HEK293 (cell line): ENCODE measurements at regions of chr6 and their contacts with region 1.

Region 1: GRCh38 chr6:132962936-132963868 is 148.8 kb downstream of the RPS12 start:
- H3K4me3 ChIP-seq: no peak overlapping the region
- H3K27ac ChIP-seq: no peak overlapping the region
- H3K4me1 ChIP-seq: peaks cover 19% of the 10 kb centered on the region
- CTCF ChIP-seq: peak; percentile 70; the same call in 1 of the 2 replicates

Region 2: DNA sequence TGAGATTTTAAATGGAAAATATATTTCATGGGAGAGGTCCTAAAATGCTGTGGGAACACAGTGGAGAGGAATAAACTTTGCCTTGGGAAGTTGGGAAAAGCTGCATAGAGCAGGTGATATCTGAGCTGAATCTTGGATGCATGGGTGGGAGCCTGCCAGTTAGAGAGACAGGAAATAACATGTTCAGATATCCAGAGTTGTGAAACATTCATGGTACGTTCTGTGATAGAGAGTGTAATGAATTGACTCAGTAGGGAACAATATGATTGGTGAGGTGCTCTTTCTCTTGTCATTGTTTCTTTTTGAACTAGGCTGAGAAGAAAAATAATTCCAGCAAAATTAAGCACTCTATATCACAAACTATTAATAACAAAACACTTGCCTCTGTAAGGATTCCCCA is 76.0 kb before region 1 on chr6:
- CTCF ChIA-PET with region 1: no interaction called
- POLR2A ChIA-PET with region 1: no interaction called
- H3K4me3 ChIP-seq: no peak overlapping the region
- H3K27ac ChIP-seq: no peak overlapping the region
- H3K4me1 ChIP-seq: no peaks in the 10 kb centered on the region
- CTCF ChIP-seq: no peak

Region 3: GRCh38 chr6:132937466-132937906 is 25.7 kb before region 1 on chr6:
- CTCF ChIA-PET with region 1: interaction called, 14 read pairs
- POLR2A ChIA-PET with region 1: no interaction called
- H3K4me3 ChIP-seq: no peak overlapping the region
- H3K27ac ChIP-seq: no peak overlapping the region
- H3K4me1 ChIP-seq: peaks cover 8% of the 10 kb centered on the region
- CTCF ChIP-seq: peak; percentile 53

Region 4: GRCh38 chr6:132973514-132973993 is 10.4 kb after region 1 on chr6:
- CTCF ChIA-PET with region 1: interaction called, 14 read pairs
- POLR2A ChIA-PET with region 1: no interaction called
- H3K4me3 ChIP-seq: no peak overlapping the region
- H3K27ac ChIP-seq: no peak overlapping the region
- H3K4me1 ChIP-seq: peaks cover 19% of the 10 kb centered on the region
- CTCF ChIP-seq: no peak

Region 5: DNA sequence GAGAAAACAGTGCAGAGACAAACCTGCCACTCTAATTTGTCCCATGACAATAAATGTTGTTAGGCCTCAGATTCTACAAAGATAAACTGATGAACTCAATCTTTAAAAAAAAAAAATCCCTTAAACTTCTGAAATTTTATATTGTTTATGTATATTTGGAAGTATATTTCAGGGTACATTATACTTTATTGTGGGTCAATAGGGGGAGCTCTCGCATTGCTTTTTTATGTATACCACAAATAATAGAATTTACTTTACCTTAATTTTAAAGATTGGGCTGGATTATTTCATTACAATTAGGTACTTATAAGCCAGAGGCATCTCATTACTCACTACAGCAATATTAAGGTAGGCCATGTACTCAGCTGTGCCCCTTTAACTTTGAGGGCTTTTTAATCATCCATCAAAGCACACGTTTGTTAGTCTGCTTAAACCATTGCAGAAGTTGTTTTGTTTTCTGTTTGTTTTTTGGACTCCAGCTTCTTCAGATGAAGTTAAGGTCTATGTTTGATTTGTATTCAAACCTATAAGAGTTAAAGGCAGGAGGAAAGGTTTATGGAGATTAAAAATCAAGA is 221.7 kb after region 1 on chr6:
- CTCF ChIA-PET with region 1: interaction called, 16 read pairs
- POLR2A ChIA-PET with region 1: no interaction called
- H3K4me3 ChIP-seq: no peak overlapping the region
- H3K27ac ChIP-seq: no peak overlapping the region
- H3K4me1 ChIP-seq: peaks cover 36% of the 10 kb centered on the region
- CTCF ChIP-seq: peak; percentile 32; the same call in 1 of the 2 replicates